Adrenal gland (tissue), 19 donors: ENCODE measurements at regions of chr1 and their contacts with region 1.

Region 1: GRCh38 chr1:51296383-51297357 is 33.7 kb downstream of the TTC39A start:
- DNase-seq: peak; percentile 80 to 93 (median 85)
- H3K4me3 ChIP-seq: peak overlapping the region in 3 of 4 donors; percentile 27 to 55 (median 28)
- H3K27ac ChIP-seq: no peak overlapping the region
- H3K4me1 ChIP-seq: no peaks in the 10 kb centered on the region
- H3K27me3 ChIP-seq: no peaks in the 10 kb centered on the region
- CTCF ChIP-seq: peak; percentile 86 to 97 (median 94)
- POLR2A ChIP-seq: no peak

Region 2: DNA sequence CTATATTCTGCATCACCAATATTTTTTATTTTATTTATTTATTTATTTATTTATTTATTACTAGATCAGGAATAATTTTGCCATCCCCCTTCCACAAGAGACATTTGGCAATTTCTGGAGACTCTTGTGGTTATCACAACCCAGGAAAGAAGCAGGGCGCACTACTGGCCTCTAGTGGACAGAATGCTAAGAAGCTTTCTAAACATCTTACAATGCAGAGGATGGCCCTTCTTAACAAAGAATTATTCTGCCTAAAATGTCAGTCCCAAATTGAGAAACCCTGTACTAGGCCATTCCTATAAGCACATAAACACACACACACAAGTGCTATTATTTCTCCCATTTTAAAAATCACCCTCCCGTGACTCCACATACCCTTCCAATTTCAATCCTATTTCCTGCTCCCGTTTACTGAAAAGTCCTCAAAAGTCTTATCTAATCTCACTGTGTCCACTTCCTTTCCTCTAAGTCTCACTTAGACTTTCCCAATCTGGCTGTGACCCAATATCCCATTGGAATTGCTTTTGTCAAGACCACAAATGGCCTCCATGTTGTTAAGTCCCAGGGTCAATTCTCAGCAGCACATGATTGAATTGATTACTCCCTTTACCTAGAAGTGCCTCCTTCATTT is 104.3 kb before region 1 on chr1:
- intact Hi-C with region 1: loop called (anchors 5 kb)
- DNase-seq: peak; percentile 61 to 87 (median 75)
- H3K4me3 ChIP-seq: no peak overlapping the region
- H3K27ac ChIP-seq: peak overlapping the region in 1 of 5 donors; percentile 18
- H3K4me1 ChIP-seq: no peaks in the 10 kb centered on the region
- H3K27me3 ChIP-seq: no peaks in the 10 kb centered on the region
- CTCF ChIP-seq: peak; percentile 53 to 88 (median 77)
- POLR2A ChIP-seq: no peak

Region 3: GRCh38 chr1:51235673-51236530 is 60.8 kb before region 1 on chr1 and contains the start of gene RNF11:
- intact Hi-C with region 1: loop called in 1 of 2 experiments (anchors 10 kb)
- DNase-seq: peak; percentile 93 to 97 (median 96)
- H3K4me3 ChIP-seq: peak within 1 kb of the TSS; percentile 68 to 95 (median 83)
- H3K27ac ChIP-seq: peak within 1 kb of the TSS; percentile 92 to 98 (median 96)
- H3K4me1 ChIP-seq: peaks cover 14 to 47% of the 10 kb centered on the region in 2 donors
- H3K27me3 ChIP-seq: no peaks in the 10 kb centered on the region
- CTCF ChIP-seq: peak in 2 of 6 experiments; percentile 3 to 14
- POLR2A ChIP-seq: peak; percentile 88 to 95
- total RNA-seq, gene RNF11: 70.3 to 140 (median 118) TPM

Region 4: GRCh38 chr1:51484591-51484990 is 187.9 kb after region 1 on chr1:
- intact Hi-C with region 1: no loop called
- DNase-seq: no peak
- H3K4me3 ChIP-seq: no peak overlapping the region
- H3K27ac ChIP-seq: no peak overlapping the region
- H3K4me1 ChIP-seq: peaks cover 0 to 22% of the 10 kb centered on the region in 2 donors
- H3K27me3 ChIP-seq: no peaks in the 10 kb centered on the region
- CTCF ChIP-seq: no peak
- POLR2A ChIP-seq: no peak